Mucosa of descending colon (tissue), 3 donors: ENCODE measurements at regions of chr17 and their contacts with region 1.

Region 1: GRCh38 chr17:10875979-10876555 is 38.2 kb upstream of the PIRT start:
- DNase-seq: peak in 2 of 3 donors; percentile 51 to 73
- ATAC-seq: peak; percentile 76
- H3K4me3 ChIP-seq: no peak overlapping the region
- H3K4me1 ChIP-seq: no peaks in the 10 kb centered on the region
- CTCF ChIP-seq: no peak

Region 2: GRCh38 chr17:10992106-10992880 is 116.2 kb after region 1 on chr17:
- intact Hi-C with region 1: no loop called
- DNase-seq: no peak
- ATAC-seq: no peak
- H3K4me3 ChIP-seq: no peak overlapping the region
- H3K4me1 ChIP-seq: no peaks in the 10 kb centered on the region
- CTCF ChIP-seq: no peak

Region 3: GRCh38 chr17:11144358-11145233 is 268.5 kb after region 1 on chr17:
- intact Hi-C with region 1: loop called (anchors 2 to 5 kb)
- DNase-seq: peak in 2 of 3 donors; percentile 27 to 46
- ATAC-seq: peak; percentile 92
- H3K4me3 ChIP-seq: no peak overlapping the region
- H3K4me1 ChIP-seq: no peaks in the 10 kb centered on the region
- CTCF ChIP-seq: peak; percentile 8

Region 4: GRCh38 chr17:11296994-11297393 is 420.9 kb after region 1 on chr17:
- intact Hi-C with region 1: loop called in 1 of 2 experiments (anchors 10 kb)
- DNase-seq: no peak
- ATAC-seq: no peak
- H3K4me3 ChIP-seq: no peak overlapping the region
- H3K4me1 ChIP-seq: no peaks in the 10 kb centered on the region
- CTCF ChIP-seq: no peak

Region 5: DNA sequence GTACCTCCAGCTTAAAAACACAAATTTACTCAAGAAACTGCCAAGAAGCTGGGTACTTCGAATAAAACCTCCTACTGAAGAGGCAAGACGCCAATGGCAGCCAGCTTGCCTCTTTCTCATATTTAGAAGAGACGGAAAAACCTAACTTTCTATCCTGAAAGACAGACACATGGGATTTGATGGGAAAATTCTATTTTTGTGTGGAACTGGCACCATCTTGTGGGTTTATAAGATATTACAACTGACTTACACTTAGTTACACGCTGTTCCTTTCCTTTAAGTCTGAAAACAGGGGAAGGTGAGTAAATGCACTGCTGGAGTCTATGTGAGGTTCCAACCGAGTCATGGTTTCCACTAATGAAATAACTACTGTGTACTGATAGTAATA is 1110.9 kb after region 1 on chr17:
- intact Hi-C with region 1: loop called in 1 of 2 experiments (anchors 10 kb)
- DNase-seq: no peak
- ATAC-seq: peak; percentile 31
- H3K4me3 ChIP-seq: no peak overlapping the region
- H3K4me1 ChIP-seq: peaks cover 6% of the 10 kb centered on the region
- CTCF ChIP-seq: no peak